Activated naive CD4-positive, alpha-beta T cell treated with anti-CD3 and anti-CD28 coated beads for 36 hours (primary cell): ENCODE measurements at regions of chr19 and their contacts with region 1.

Region 1: GRCh38 chr19:11096210-11096841 is 7.1 kb downstream of the LDLR start:
- DNase-seq: peak; percentile 55
- H3K4me3 Mint-ChIP-seq: peak overlapping the region; percentile 25
- H3K27ac Mint-ChIP-seq: peak overlapping the region; percentile 87
- H3K4me1 Mint-ChIP-seq: peaks cover 68% of the 10 kb centered on the region
- H3K27me3 Mint-ChIP-seq: no peaks in the 10 kb centered on the region

Region 2: DNA sequence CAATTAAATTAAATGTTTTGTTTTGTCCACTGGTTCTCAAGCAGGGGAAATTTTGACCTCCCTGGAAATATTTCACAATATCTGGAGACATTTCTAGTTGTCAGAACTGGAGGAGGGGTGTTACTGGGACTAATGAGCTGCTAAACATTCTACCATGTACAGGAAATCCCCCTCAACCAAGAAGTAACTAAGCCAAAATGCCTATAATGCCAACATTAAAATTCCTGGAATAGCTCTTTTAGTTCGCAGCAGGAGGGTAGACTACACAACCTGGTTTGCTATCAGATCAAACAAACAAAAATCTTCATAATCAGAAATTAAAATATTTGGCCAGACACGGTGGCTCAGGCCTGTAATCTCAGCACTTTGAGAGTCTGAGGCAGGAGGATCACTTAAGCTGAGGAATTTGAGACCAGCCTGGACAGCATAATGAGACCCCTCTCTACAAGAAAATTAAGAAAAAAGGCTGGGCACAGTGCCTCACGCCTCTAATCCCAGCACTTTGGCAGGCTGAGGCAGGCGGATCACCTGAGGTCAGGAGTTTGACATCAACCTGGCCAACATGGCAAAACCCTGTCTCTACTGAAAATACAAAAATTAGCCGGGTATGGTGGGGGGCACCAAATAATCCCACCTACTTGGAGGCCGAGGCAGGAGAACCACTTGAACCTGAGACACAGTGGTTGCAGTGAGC is 149.2 kb before region 1 on chr19:
- CTCF ChIA-PET with region 1: interaction called, 3 read pairs
- intact Hi-C with region 1: loop called (anchors 2 kb)
- DNase-seq: no peak
- H3K4me3 Mint-ChIP-seq: no peak overlapping the region
- H3K27ac Mint-ChIP-seq: no peak overlapping the region
- H3K4me1 Mint-ChIP-seq: peaks cover 3% of the 10 kb centered on the region
- H3K27me3 Mint-ChIP-seq: no peaks in the 10 kb centered on the region

Region 3: DNA sequence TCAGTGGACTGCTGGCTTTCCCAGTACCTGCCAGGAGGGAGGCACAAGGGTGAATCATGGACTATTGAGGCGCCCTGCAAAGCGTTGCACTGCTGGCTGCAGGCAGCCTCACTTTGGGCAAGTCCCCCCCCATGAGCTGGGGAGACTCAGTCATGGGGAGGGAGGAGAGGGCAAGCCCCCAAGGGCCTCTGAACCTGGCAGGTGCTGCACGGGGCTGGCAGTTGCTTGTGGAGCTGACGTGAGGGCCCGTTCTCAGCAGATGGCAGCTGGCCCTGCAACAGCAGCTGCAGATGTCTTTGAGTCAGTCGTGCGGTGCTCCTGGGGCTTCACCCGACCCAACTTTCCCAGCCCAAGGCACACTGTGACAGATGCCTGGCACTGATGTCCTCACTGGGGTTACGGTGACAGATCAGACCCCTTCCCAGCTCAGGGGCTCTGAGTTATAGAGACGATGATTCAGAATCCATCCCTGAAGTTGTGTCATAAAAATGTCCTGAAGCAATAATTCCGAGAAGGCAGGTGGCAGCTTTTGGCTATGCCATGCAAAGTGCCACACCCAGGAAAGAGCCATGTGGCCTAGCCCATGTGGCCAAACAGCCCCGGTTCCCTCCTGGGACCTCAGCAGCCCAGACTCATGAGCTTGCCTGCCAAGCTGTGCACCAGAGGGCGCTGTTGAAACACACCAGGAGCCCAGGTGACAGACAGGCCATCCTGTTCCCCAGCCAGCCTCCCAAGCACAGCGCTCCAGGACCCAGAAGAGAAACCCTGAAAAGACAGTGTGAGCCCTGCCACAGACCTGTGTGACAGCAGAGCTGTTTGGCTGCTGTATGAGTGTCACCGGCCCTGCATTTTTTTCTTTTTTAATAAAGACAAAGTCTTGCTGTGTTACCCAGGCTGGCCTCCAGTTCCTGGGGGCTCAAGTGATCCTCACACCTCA is 60.6 kb before region 1 on chr19:
- CTCF ChIA-PET with region 1: interaction called, 5 read pairs
- intact Hi-C with region 1: loop called (anchors 2 kb)
- DNase-seq: peak; percentile 95
- H3K4me3 Mint-ChIP-seq: no peak overlapping the region
- H3K27ac Mint-ChIP-seq: peak overlapping the region; percentile 56
- H3K4me1 Mint-ChIP-seq: peaks cover 8% of the 10 kb centered on the region
- H3K27me3 Mint-ChIP-seq: no peaks in the 10 kb centered on the region

Region 4: DNA sequence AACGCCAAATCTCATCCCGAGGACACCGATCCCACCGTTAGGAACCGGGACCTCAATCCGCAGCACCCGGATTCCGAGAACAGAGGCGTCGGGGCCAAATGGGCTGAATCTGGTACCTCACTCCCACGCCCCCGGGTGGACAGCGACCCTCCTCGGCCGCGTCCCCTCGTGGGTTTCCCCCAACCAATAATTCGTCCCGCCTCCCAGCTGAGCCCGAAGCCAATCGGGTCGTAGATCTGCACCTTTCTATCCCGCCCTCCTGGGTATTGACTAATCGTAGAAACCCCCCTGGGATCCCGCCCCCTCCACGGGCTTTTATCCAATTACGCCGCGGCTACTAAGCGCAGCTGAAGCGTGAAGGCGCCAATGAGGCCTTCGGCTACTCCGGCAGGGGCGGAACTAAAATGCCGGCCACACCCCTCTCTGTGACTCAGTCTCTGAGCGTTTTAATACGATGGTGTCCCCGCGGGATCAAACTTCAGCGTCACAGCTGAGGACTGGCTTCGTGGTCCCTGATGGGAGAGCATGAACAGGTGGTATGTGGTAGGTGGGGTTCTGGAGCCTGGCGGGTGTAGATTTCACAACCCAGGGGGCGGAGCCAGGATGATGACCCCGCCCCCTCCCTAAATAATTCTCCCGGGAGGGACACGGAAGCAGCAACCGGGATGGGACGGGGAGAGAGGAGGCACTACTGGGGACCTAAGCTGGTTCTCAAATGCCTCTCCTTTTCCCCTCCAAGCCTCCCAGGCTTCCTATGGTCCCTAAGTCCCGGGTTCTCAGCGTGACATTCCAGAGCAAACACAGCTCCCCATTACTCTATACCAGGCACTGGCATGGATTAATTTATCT is 250.0 kb after region 1 on chr19 and contains the starts of genes CCDC159 and TMEM205:
- CTCF ChIA-PET with region 1: no interaction called
- intact Hi-C with region 1: loop called (anchors 1 kb)
- DNase-seq: peak; percentile 100
- H3K4me3 Mint-ChIP-seq: peak within 1 kb of the TSS; percentile 97
- H3K27ac Mint-ChIP-seq: peak within 1 kb of the TSS; percentile 86
- H3K4me1 Mint-ChIP-seq: peaks cover 26% of the 10 kb centered on the region
- H3K27me3 Mint-ChIP-seq: no peaks in the 10 kb centered on the region
- total RNA-seq, gene CCDC159: 15.2 to 16.5 TPM
- total RNA-seq, gene TMEM205: 21.4 to 24.2 TPM

Region 5: GRCh38 chr19:11581740-11582139 is 485.4 kb after region 1 on chr19:
- CTCF ChIA-PET with region 1: no interaction called
- intact Hi-C with region 1: loop called (anchors 5 kb)
- DNase-seq: peak; percentile 82
- H3K4me3 Mint-ChIP-seq: peak overlapping the region; percentile 51
- H3K27ac Mint-ChIP-seq: peak overlapping the region; percentile 95
- H3K4me1 Mint-ChIP-seq: peaks cover 29% of the 10 kb centered on the region
- H3K27me3 Mint-ChIP-seq: no peaks in the 10 kb centered on the region